ENCODE measurements at regions of chr16 and their contacts with region 1.

Region 1: DNA sequence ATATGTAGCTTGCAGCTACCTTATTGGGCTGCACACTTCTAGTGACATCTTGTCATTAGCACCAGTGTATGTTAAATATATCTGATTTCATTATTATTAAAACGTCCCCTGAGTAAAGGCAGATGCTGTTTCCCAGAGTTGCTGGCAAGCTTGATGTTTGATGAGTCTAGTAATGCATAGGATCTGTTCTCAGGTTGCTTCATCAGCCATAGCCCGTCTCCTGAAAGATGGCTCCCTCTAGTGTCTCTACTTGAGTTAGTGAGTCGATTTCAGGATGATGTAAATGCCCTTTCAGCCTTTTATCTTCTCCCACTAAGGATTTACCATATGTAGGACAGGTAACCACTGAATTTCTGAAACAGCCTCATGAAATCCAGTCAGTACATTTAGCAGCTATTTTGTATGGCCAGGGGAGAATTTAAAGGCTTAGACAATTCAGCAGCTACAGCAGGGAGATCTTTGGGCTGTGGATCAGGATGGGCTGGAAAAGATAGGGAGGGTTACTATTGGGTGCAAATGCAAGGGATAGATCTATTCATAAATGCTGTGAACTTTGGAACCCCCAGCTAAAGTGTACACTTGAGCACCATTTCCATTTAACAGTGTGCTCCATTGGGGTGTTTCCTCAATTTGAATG is 376.3 kb downstream of the CNTNAP4 start:
- DNase-seq: peak; percentile 24
- H3K4me3 ChIP-seq: no peak overlapping the region
- CTCF ChIP-seq: peak; percentile 74

Region 2: DNA sequence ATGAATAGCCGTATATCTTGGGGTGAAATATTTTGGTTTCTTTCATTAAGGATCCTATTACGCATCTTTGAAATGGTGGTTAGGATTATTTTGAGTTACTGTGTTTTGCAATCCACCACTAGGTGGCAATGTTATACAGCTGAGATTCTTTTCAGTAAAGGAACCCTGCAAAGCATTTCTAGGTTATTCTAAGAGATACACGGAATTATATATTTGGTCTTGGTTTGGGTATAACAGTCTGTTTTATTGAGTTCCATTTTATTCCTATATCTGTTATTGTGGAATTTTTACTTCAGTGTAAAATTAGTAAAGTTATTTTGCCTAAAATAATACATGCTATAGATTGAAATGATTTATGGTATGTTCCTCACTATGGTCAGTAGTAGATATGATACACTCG is 864.3 kb before region 1 on chr16:
- in situ Hi-C with region 1: loop called (anchors 25 kb)
- DNase-seq: peak; percentile 35
- H3K4me3 ChIP-seq: no peak overlapping the region
- CTCF ChIP-seq: peak; percentile 61

Region 3: DNA sequence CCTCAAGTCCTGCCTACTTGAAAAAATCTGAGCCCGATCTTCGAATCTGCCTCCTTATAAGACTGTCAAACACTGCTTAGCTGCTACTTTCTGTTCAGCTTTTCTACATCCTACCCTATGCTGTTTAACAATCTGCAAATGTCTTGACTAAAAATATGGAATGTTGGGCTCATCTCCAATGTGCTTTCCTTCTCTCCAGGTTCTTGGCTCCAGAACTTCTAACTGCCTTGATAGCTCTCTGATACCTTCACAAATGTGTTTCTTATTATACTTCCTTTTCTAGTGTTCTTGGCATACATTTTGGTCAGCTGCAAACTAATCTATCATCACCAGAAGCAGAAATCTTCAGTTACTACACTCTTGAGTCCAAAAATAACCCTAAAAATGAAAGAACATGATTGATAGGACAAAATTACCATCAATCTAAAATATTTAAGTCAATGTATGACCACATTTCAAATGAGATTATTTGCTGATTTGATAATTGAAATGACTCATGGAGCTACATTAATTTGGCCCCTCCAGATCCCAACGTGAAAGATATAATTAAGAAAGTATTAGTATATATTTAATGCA is 165.2 kb after region 1 on chr16:
- in situ Hi-C with region 1: no loop called
- DNase-seq: no peak
- H3K4me3 ChIP-seq: no peak overlapping the region
- CTCF ChIP-seq: no peak